Left colon (tissue), 2 donors: ENCODE measurements at regions of chr19 and their contacts with region 1.

Region 1: DNA sequence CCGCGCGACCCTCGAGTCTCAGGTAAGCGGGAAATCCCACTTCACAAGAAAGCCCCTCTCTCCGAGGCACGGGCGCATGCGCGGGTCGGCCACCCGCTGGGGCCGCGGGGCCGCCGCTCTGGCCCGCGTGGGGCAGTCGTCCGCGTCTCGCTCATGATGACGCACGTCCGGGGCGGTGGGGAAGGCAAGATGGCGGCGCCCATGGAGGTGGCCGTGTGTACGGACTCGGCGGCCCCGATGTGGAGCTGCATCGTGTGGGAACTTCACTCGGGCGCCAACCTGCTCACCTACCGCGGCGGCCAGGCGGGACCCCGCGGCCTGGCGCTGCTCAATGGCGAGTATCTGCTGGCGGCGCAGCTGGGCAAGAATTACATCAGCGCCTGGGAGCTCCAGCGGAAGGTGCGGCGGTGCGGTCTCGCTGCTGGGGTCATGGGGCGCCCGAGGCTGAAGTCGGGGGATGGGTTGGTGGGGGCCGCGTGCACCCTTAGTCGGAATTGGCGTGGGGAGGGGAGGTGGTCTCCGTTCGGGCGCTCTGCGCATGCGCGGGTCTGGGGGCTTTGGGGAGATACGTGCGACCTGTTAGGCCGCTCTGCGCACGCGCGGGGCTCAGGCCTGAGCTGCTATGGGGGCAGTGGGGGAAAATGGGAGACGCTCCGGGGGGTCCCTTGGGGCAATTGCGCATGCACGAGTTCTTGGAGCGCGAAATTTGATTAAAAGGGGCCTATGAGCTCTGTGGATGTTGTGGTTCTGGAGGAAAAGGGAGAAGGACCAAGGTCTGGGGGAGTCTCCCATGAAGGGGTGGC is at the start of gene WDR18:
- DNase-seq: peak; percentile 91 to 95
- ATAC-seq: peak; percentile 96
- total RNA-seq, gene WDR18: 21.5 to 28.1 TPM

Region 2: DNA sequence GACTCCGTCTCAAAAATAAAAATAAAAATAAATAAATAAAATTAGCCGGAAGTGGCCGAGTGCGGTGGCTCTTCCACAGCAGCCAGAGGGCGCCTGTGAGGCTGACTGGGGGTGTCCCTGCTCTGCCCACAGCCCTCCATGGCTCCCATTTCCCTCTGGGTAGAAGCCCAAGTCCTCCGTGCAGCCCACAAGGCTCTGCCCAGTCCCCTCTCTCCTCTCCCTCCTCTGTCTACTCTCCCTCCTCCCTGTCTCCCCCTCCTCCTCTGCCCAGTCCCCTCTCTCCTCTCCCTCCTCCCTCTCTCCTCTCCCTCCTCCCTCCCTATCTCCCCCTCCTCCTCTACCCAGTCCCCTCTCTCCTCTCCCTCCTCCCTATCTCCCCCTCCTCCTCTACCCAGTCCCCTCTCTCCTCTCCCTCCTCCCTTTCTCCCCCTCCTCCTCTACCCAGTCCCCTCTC is 213.0 kb before region 1 on chr19:
- intact Hi-C with region 1: loop called in 1 of 2 experiments (anchors 10 kb)
- DNase-seq: no peak
- ATAC-seq: peak; percentile 31

Region 3: GRCh38 chr19:913080-913748 is 71.2 kb before region 1 on chr19 and contains the start of gene R3HDM4:
- intact Hi-C with region 1: no loop called
- DNase-seq: peak; percentile 77 to 88
- ATAC-seq: peak; percentile 64
- total RNA-seq, gene R3HDM4: 54.6 to 66.4 TPM

Region 4: DNA sequence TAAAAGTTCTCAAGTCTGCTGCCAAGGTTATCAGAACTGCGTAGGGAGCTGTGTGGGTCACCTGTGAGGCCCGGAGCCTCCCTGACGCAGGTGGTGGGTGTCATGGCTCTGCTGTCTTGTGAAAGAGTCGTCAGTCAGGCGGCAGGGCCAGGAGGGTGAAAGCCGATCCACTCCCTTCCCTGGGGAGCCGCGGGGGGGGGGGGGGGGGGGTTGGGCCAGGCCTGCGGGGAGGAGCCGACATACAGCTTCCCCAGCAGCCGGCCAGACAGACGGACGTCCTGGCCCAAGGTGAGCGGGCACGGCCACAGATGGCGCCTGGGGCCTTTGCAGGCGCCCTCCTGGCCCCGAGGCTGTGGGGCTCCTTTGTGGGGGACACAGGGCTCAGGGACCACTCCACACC is 177.3 kb after region 1 on chr19:
- intact Hi-C with region 1: no loop called
- DNase-seq: no peak
- ATAC-seq: peak; percentile 41